A673 (cell line): ENCODE measurements at regions of chr3 and their contacts with region 1.

Region 1: GRCh38 chr3:66038726-66039589 is at the start of gene MAGI1:
- DNase-seq: peak; percentile 91
- H3K4me3 ChIP-seq: peak within 1 kb of the TSS; percentile 85
- H3K27ac ChIP-seq: peak within 1 kb of the TSS; percentile 91
- H3K4me1 ChIP-seq: no peaks in the 10 kb centered on the region
- H3K27me3 ChIP-seq: no peaks in the 10 kb centered on the region
- CTCF ChIP-seq: no peak
- total RNA-seq, gene MAGI1: 30.5 and 36.1 TPM in 2 replicates

Region 2: GRCh38 chr3:65967451-65967850 is 71.5 kb before region 1 on chr3:
- CTCF ChIA-PET with region 1: no interaction called
- POLR2A ChIA-PET with region 1: no interaction called
- intact Hi-C with region 1: loop called (anchors 5 kb)
- DNase-seq: peak; percentile 53
- H3K4me3 ChIP-seq: no peak overlapping the region
- H3K27ac ChIP-seq: peak overlapping the region; percentile 55
- H3K4me1 ChIP-seq: peaks cover 62% of the 10 kb centered on the region
- H3K27me3 ChIP-seq: no peaks in the 10 kb centered on the region
- CTCF ChIP-seq: no peak

Region 3: DNA sequence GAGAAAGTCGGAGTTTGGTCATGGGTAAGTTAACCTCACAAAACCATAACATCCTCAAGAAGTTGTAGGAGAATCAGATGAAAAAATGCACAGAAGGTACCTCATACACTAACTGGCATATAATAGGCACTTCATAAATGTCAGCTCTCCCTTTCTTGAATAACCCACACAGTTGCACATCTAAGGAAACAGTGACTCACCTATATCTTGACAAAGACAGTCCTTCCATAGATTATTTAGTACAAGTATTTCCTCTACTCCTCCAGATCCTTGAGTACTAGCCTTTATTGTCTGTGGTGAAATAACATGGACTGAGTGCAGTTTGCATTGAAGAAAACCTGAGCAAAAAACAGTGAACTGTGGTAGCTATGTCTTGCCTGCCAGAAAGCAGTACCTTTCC is 46.9 kb before region 1 on chr3:
- CTCF ChIA-PET with region 1: no interaction called
- POLR2A ChIA-PET with region 1: no interaction called
- intact Hi-C with region 1: no loop called
- DNase-seq: no peak
- H3K4me3 ChIP-seq: no peak overlapping the region
- H3K27ac ChIP-seq: no peak overlapping the region
- H3K4me1 ChIP-seq: peaks cover 13% of the 10 kb centered on the region
- H3K27me3 ChIP-seq: no peaks in the 10 kb centered on the region
- CTCF ChIP-seq: no peak

Region 4: DNA sequence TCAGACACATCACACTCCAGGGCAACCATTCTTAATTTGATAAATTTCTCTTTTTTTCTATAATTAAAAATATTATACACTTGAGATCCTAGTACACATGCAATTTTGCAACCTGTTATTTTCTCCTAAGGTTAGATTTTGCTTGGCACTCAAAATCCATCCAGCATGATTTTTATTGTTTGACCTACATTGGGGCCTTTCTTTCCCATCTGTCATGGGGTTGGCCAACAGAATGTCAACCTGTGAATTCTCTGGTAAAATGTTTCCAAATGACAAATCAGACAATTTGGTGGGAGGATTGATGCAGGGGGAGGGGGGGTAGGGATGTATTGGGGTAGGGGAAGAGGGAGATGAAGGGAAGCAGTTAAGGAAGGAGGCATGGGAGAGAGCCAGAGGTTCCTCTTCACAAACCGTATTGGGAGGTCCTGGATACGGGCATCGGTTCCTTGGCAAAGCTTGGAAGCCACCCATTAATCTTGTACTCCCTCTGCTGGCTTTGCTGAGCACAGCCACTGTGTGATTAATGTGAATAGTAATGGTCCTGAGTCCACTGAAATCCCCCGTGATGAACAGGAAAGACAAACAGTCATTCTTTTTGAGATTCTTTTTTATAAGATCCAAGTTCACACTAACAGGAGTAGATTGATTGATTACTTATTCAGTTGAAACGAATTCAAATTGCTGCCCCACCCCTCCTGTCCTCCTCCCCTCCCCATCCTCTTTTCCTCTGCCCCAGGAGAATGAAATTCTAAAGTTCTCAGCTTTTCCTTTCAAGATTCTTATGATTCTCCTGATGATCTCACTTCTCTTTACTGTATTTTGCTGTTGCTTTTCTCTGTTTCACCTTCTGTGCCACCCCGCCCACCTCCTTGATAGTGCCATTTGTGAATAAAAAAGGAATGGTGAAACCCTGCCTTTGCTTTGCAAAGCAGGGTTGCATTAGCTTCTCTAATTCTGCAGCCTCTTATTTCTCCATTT is 99.7 kb after region 1 on chr3:
- CTCF ChIA-PET with region 1: no interaction called
- POLR2A ChIA-PET with region 1: no interaction called
- intact Hi-C with region 1: loop called (anchors 5 kb)
- DNase-seq: peak; percentile 78
- H3K4me3 ChIP-seq: no peak overlapping the region
- H3K27ac ChIP-seq: no peak overlapping the region
- H3K4me1 ChIP-seq: peaks cover 7% of the 10 kb centered on the region
- H3K27me3 ChIP-seq: no peaks in the 10 kb centered on the region
- CTCF ChIP-seq: peak; percentile 65